ENCODE measurements at regions of chr10 and their contacts with region 1.

Region 1: GRCh38 chr10:80662577-80663261 is 125.0 kb downstream of the SH2D4B start:
- DNase-seq: peak; percentile 74
- H3K4me3 Mint-ChIP-seq: no peak overlapping the region
- H3K27ac Mint-ChIP-seq: no peak overlapping the region
- H3K4me1 Mint-ChIP-seq: no peaks in the 10 kb centered on the region
- H3K27me3 Mint-ChIP-seq: peaks cover 19% of the 10 kb centered on the region
- CTCF ChIP-seq: peak; percentile 81

Region 2: DNA sequence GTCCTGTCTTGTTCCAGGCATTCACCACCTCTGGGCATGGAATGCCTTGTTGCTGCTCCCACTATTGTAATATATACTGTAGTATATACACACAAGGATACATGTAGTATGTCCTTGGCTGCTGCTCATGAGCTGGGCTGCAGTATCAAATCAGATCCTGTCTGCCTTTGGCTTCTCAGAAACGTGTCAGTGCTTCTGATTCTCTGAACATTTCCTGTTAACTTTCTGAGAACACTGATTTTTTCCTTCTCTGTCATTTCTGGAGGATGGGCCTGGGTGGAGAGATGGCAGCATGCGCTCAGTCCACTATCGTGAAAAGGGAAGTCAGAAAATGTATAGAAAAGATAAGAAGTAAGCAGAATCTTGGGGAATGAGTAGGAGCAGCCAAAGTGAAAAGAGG is 1114.7 kb before region 1 on chr10:
- CTCF ChIA-PET with region 1: no interaction called
- POLR2A ChIA-PET with region 1: no interaction called
- intact Hi-C with region 1: no loop called
- DNase-seq: no peak
- H3K4me3 Mint-ChIP-seq: no peak overlapping the region
- H3K27ac Mint-ChIP-seq: no peak overlapping the region
- H3K4me1 Mint-ChIP-seq: no peaks in the 10 kb centered on the region
- H3K27me3 Mint-ChIP-seq: peaks cover 84% of the 10 kb centered on the region
- CTCF ChIP-seq: no peak

Region 3: GRCh38 chr10:80382989-80383388 is 279.7 kb before region 1 on chr10:
- CTCF ChIA-PET with region 1: interaction called, 11 read pairs
- POLR2A ChIA-PET with region 1: no interaction called
- intact Hi-C with region 1: loop called (anchors 1 kb)
- DNase-seq: peak; percentile 57
- H3K4me3 Mint-ChIP-seq: no peak overlapping the region
- H3K27ac Mint-ChIP-seq: no peak overlapping the region
- H3K4me1 Mint-ChIP-seq: peaks cover 5% of the 10 kb centered on the region
- H3K27me3 Mint-ChIP-seq: no peaks in the 10 kb centered on the region
- CTCF ChIP-seq: peak; percentile 75

Region 4: GRCh38 chr10:80599424-80599847 is 63.3 kb before region 1 on chr10:
- CTCF ChIA-PET with region 1: interaction called, 38 read pairs
- POLR2A ChIA-PET with region 1: no interaction called
- intact Hi-C with region 1: no loop called
- DNase-seq: peak; percentile 64
- H3K4me3 Mint-ChIP-seq: no peak overlapping the region
- H3K27ac Mint-ChIP-seq: no peak overlapping the region
- H3K4me1 Mint-ChIP-seq: no peaks in the 10 kb centered on the region
- H3K27me3 Mint-ChIP-seq: no peaks in the 10 kb centered on the region
- CTCF ChIP-seq: peak; percentile 67

Region 5: GRCh38 chr10:80632742-80633141 is 30.0 kb before region 1 on chr10:
- CTCF ChIA-PET with region 1: interaction called, 16 read pairs
- POLR2A ChIA-PET with region 1: no interaction called
- intact Hi-C with region 1: no loop called
- DNase-seq: no peak
- H3K4me3 Mint-ChIP-seq: no peak overlapping the region
- H3K27ac Mint-ChIP-seq: no peak overlapping the region
- H3K4me1 Mint-ChIP-seq: no peaks in the 10 kb centered on the region
- H3K27me3 Mint-ChIP-seq: no peaks in the 10 kb centered on the region
- CTCF ChIP-seq: no peak

Region 6: DNA sequence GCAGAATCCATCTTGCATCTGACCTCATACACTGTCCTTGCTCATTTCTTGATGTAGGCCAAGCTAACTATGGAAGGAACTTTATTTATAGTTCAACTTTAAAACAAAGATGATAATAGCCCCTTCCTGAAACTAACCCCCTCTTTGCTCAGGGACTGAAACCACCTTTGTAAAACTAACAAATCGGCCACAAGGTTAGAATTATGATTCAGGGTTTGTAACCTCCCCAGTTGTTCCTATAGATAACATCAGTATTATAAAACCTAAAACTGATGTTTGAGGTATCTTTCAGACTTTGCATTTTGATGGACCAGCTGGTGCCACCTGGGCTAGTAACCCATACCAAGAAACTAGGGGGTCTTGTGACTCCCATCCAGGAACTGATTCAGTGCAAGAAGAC is 18.4 kb after region 1 on chr10:
- CTCF ChIA-PET with region 1: interaction called, 21 read pairs
- POLR2A ChIA-PET with region 1: no interaction called
- intact Hi-C with region 1: no loop called
- DNase-seq: no peak
- H3K4me3 Mint-ChIP-seq: no peak overlapping the region
- H3K27ac Mint-ChIP-seq: no peak overlapping the region
- H3K4me1 Mint-ChIP-seq: no peaks in the 10 kb centered on the region
- H3K27me3 Mint-ChIP-seq: no peaks in the 10 kb centered on the region
- CTCF ChIP-seq: no peak

Region 7: GRCh38 chr10:80805343-80806020 is 142.8 kb after region 1 on chr10:
- CTCF ChIA-PET with region 1: no interaction called
- POLR2A ChIA-PET with region 1: no interaction called
- intact Hi-C with region 1: no loop called
- DNase-seq: no peak
- H3K4me3 Mint-ChIP-seq: no peak overlapping the region
- H3K27ac Mint-ChIP-seq: no peak overlapping the region
- H3K4me1 Mint-ChIP-seq: no peaks in the 10 kb centered on the region
- H3K27me3 Mint-ChIP-seq: peaks cover 17% of the 10 kb centered on the region
- CTCF ChIP-seq: no peak

Region 8: GRCh38 chr10:80938903-80939302 is 276.2 kb after region 1 on chr10:
- CTCF ChIA-PET with region 1: interaction called, 11 read pairs
- POLR2A ChIA-PET with region 1: no interaction called
- intact Hi-C with region 1: no loop called
- DNase-seq: no peak
- H3K4me3 Mint-ChIP-seq: no peak overlapping the region
- H3K27ac Mint-ChIP-seq: no peak overlapping the region
- H3K4me1 Mint-ChIP-seq: no peaks in the 10 kb centered on the region
- H3K27me3 Mint-ChIP-seq: peaks cover 89% of the 10 kb centered on the region
- CTCF ChIP-seq: no peak

Region 9: GRCh38 chr10:81018708-81019365 is 356.1 kb after region 1 on chr10:
- CTCF ChIA-PET with region 1: interaction called, 26 read pairs
- POLR2A ChIA-PET with region 1: no interaction called
- intact Hi-C with region 1: loop called (anchors 10 kb)
- DNase-seq: peak; percentile 64
- H3K4me3 Mint-ChIP-seq: no peak overlapping the region
- H3K27ac Mint-ChIP-seq: no peak overlapping the region
- H3K4me1 Mint-ChIP-seq: peaks cover 7% of the 10 kb centered on the region
- H3K27me3 Mint-ChIP-seq: peaks cover 29% of the 10 kb centered on the region
- CTCF ChIP-seq: peak; percentile 77

Measured in MCF 10A (cell line).